HepG2 (cell line): ENCODE measurements at regions of chr6 and their contacts with region 1.

Region 1: DNA sequence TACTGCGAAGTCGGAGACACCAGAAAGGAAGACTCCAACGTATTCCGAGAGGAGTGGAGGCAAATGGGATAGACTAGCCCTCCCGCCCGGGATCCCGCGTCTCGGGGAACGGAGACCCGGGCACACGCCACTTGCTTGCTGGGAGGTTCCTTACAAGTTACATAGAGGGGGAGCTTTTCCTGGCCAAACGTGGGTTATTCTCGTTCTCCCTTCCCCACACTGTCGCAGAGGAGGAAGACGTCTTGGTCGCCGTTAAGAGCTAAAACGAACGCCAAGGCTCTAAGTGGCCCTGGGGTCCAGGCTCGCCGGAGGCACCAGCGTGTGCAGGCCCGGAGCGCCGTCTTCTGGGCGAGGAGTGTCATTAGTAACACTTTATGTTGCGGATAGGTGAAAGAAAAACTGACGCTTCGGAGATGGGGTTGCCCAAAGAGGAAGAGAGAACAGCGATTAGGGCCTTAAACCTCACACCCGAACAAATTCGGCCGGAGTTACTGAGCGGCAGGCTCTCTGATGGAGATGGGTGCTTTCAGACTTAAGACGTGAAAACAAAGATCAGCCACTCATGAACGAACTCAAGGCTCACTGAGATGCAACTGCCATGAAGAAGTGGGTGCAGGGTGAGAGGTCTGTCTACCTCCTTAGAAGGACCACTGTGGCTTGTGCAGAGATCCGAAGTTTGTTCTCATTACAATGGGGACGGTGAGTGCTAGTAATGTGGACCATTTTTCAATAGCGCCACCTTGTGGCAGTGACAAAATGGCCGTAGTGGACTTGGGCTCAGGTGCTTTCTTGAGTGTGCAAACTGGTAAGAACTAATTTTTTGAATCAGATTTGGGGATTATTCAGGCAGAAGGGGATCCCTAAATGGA is 11.7 kb upstream of the ZNF311 start:
- DNase-seq: peak; percentile 80
- ATAC-seq: peak; percentile 90
- H3K4me3 ChIP-seq: peak overlapping the region; percentile 67 to 82 (median 70)
- H3K27ac ChIP-seq: peak overlapping the region; percentile 15
- H3K4me1 ChIP-seq: peaks cover 22% of the 10 kb centered on the region
- H3K27me3 ChIP-seq: no peaks in the 10 kb centered on the region; a peak in 2 of 5 replicates
- CTCF ChIP-seq: peak; percentile 82
- EP300 ChIP-seq: no peak
- POLR2A ChIP-seq: no peak
- RAD21 ChIP-seq: peak; percentile 81

Region 2: DNA sequence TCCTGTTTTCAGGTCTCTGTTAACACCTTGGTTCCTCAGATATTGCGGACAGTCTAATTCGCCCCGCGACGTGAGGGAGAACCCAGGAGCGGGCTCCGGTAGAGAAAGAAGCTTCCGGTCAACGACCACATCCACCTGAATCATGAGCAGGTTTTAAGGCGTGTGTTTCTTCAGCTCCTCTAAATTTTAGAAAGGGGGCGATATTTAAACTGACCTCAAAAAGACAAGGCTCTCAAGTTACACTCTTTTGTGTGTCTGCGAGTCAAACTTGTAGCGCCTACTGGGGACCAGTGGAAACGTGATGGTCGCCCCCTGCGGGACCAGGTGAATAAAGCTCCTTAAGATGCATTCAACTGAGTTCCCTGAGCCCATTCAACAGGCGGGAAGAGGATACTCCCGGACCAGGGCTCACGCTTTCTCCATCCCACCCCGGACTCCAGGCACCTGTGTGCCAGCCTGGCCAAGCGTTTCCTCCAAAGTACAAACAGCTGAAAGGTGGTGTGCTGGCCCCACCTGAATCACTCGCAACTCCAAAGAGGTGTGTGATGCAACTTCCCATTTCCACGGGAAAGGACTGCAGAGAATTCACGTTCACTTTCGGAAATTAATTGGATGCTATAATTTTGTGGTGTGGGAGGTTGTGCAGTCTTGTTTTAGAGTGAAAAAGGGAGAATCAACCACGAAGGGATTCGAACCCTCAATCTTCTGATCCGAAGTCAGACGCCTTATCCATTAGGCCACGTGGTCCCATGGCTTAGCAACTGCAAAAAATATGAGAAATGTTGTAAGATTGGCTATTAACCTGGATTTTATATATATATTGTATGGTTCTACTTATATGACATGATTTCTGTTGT is 474.1 kb before region 1 on chr6:
- CTCF ChIA-PET with region 1: no interaction called
- POLR2A ChIA-PET with region 1: no interaction called
- in situ Hi-C with region 1: no loop called
- intact Hi-C with region 1: no loop called
- DNase-seq: peak; percentile 80
- ATAC-seq: peak; percentile 84
- H3K4me3 ChIP-seq: peak overlapping the region; percentile 53 to 76 (median 64)
- H3K27ac ChIP-seq: no peak overlapping the region
- H3K4me1 ChIP-seq: peaks cover 22% of the 10 kb centered on the region
- H3K27me3 ChIP-seq: peaks cover 0 to 3% of the 10 kb centered on the region in 2 experiments; a peak in 2 of 5 replicates
- CTCF ChIP-seq: peak; percentile 75
- EP300 ChIP-seq: no peak
- POLR2A ChIP-seq: no peak
- RAD21 ChIP-seq: peak; percentile 71

Region 3: GRCh38 chr6:28880894-28881780 is 135.7 kb before region 1 on chr6:
- CTCF ChIA-PET with region 1: interaction called, 4 read pairs
- POLR2A ChIA-PET with region 1: no interaction called
- in situ Hi-C with region 1: no loop called
- intact Hi-C with region 1: loop called (anchors 5 kb)
- DNase-seq: peak; percentile 82
- ATAC-seq: peak; percentile 27
- H3K4me3 ChIP-seq: peak overlapping the region; percentile 38 to 63 (median 59)
- H3K27ac ChIP-seq: no peak overlapping the region
- H3K4me1 ChIP-seq: peaks cover 62% of the 10 kb centered on the region
- H3K27me3 ChIP-seq: no peaks in the 10 kb centered on the region
- CTCF ChIP-seq: no peak
- EP300 ChIP-seq: no peak
- POLR2A ChIP-seq: no peak
- RAD21 ChIP-seq: no peak

Region 4: DNA sequence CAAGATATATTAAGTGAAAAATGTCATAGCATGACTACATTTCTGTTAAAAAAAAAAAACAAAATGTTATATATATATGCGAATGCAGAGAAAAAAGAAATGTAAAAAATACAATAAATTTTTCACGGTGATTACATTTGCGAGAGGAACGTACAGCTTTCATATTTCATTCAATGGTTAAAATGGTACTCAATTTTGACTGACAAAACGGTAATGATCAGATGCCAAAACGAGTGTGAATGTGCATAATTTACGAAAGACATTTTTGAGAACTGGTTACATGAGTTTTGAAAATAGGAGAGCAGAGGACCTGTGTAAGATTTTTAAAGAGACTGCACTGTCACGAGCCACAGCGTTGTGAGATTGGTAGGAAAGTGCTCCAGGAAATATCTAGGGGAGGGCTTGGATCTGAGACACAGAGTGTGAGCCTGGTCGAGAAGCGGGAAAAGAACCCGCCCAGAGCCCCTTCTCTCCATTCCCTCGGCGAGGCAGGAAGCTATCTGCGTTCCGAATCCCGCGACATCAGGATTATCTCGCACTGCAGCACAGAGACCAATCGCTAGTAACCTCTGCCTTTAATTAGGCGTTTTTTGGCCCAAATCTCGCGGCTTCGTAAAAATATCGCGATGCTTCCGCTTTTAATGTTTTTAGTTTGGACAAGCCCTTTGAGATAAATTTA is 121.5 kb before region 1 on chr6:
- CTCF ChIA-PET with region 1: interaction called, 6 read pairs
- POLR2A ChIA-PET with region 1: interaction called, 3 read pairs
- in situ Hi-C with region 1: no loop called
- intact Hi-C with region 1: loop called (anchors 1 kb)
- DNase-seq: peak; percentile 98
- ATAC-seq: peak; percentile 86
- H3K4me3 ChIP-seq: peak overlapping the region; percentile 82 to 97 (median 86)
- H3K27ac ChIP-seq: peak overlapping the region; percentile 93
- H3K4me1 ChIP-seq: peaks cover 40% of the 10 kb centered on the region
- H3K27me3 ChIP-seq: no peaks in the 10 kb centered on the region; a peak in 1 of 5 replicates
- CTCF ChIP-seq: no peak
- EP300 ChIP-seq: no peak
- POLR2A ChIP-seq: peak; percentile 90 to 95
- RAD21 ChIP-seq: no peak

Region 5: GRCh38 chr6:28996844-28997510 is 19.8 kb before region 1 on chr6:
- CTCF ChIA-PET with region 1: no interaction called
- POLR2A ChIA-PET with region 1: no interaction called
- in situ Hi-C with region 1: no loop called
- intact Hi-C with region 1: no loop called
- DNase-seq: no peak
- ATAC-seq: no peak
- H3K4me3 ChIP-seq: no peak overlapping the region
- H3K27ac ChIP-seq: no peak overlapping the region
- H3K4me1 ChIP-seq: peaks cover 12% of the 10 kb centered on the region; the same call in 1 of the 2 replicates
- H3K27me3 ChIP-seq: peaks cover 2 to 31% of the 10 kb centered on the region in 2 experiments; a peak in 3 of 5 replicates
- CTCF ChIP-seq: no peak
- EP300 ChIP-seq: no peak
- POLR2A ChIP-seq: no peak
- RAD21 ChIP-seq: no peak